ENCODE measurements at regions of chr18 and their contacts with region 1.

Region 1: GRCh38 chr18:27750014-27750413 is 426.9 kb downstream of the CDH2 start:
- DNase-seq: peak in 5 of 10 donors; percentile 19 to 79 (median 22)

Region 2: DNA sequence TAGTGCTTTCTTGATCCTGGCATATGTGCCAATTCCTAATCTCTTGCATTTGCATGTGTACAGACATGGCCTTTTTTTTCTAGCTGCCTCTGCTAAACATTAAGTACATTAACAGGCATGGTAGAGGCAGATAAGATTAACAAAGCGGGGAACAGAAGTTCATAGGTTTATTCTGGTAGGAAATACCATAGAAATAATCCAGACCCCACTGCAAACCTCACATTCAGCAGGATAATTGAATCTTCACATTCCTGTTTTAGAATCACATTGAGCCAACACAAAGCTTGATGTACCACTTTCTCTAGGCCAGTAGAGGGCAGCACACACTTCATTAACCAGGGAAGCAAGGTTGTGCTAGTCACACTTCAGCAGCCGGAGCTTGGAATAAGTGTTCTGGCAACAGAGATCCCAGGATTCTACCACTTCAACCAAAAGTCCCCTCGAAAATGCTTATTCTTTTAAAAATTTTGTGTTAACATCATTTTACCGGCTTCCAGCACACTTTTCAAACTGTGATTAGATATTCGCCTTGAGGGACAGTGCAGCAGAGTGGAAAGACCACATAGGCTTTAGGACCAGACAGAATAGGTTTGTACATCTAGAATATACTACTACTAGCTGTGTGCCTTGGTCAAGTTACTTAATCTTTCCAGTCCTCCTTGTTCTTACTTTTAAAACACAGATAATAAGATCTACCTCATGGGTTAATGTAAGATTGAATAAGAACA is 144.7 kb before region 1 on chr18:
- intact Hi-C with region 1: loop called (anchors 5 kb)
- DNase-seq: peak in 7 of 10 donors; percentile 21 to 89 (median 60)

Region 3: GRCh38 chr18:27838225-27838624 is 88.2 kb after region 1 on chr18:
- intact Hi-C with region 1: no loop called
- DNase-seq: no peak

Region 4: DNA sequence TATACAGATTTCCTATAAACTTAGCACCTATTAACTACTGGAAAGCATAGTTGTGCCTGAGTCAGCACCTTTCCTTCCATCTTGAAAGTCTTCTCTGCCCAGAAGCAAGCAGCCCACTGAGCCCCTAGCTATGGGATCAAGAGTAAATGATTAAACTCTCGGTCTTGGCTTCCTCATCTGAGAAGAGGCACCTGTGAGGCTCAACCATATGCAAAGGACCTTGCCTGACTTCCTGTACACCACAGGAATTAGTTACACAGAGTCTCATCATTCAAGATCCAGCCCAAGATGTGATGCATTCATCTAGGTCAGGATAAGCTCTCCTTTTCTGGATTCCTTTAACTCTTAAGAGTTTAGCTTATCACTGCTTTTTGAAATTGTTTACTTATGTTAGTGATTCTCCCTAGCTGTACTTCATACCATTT is 330.9 kb after region 1 on chr18:
- intact Hi-C with region 1: no loop called
- DNase-seq: no peak